ENCODE measurements at regions of chr11 and their contacts with region 1.

Region 1: DNA sequence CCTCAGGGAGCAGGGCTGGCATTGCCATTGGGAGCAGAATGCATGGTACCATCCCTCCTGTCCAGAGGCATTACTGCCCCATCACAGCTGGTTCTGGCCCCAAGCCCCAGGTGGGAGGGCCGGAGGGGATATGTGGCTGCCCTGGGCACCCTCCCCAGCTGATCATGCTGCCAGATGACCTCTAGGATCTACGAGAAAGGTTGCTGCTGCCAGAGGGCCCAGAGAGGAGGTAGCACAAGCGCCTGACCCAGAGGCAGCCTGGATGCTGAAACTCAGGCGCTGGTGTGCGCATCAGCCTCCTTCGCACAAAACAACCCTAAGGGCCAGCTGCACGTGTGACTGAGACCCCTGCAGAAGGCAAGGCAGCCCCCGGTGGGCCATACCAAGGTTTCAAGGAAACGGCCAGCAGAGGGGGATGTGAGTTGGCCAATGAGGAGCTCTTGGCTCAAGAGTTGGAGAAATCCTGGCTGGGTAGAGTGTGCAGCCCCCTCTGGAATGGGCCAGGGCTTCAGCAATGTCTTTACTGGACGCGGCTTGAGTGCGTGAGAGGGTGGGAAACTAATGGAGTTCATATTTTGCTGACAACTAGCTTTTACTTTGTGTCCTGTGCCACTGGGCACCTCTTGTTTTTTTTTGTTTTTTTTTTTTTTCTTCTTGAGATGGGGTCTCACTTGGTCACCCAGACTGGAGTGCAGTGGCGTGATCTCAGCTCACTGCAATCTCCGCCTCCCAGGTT is 88.3 kb upstream of the PARVA start:
- DNase-seq: no peak
- ATAC-seq: no peak
- H3K4me3 ChIP-seq: no peak overlapping the region
- H3K4me3 Mint-ChIP-seq: no peak overlapping the region
- H3K27ac ChIP-seq: no peak overlapping the region
- H3K27ac Mint-ChIP-seq: no peak overlapping the region
- H3K4me1 ChIP-seq: peaks cover 4 to 15% of the 10 kb centered on the region in 2 experiments
- H3K4me1 Mint-ChIP-seq: peaks cover 10 to 25% (median 12%) of the 10 kb centered on the region in 3 donors
- H3K27me3 ChIP-seq: peaks cover 0 to 4% of the 10 kb centered on the region in 2 experiments
- H3K27me3 Mint-ChIP-seq: no peaks in the 10 kb centered on the region

Region 2: GRCh38 chr11:12264361-12264760 is 24.7 kb before region 1 on chr11:
- CTCF ChIA-PET with region 1: no interaction called
- POLR2A ChIA-PET with region 1: no interaction called
- DNase-seq: no peak
- ATAC-seq: no peak
- H3K4me3 ChIP-seq: no peak overlapping the region
- H3K4me3 Mint-ChIP-seq: no peak overlapping the region
- H3K27ac ChIP-seq: no peak overlapping the region
- H3K27ac Mint-ChIP-seq: no peak overlapping the region
- H3K4me1 ChIP-seq: no peaks in the 10 kb centered on the region
- H3K4me1 Mint-ChIP-seq: no peaks in the 10 kb centered on the region
- H3K27me3 ChIP-seq: no peaks in the 10 kb centered on the region
- H3K27me3 Mint-ChIP-seq: no peaks in the 10 kb centered on the region

Region 3: DNA sequence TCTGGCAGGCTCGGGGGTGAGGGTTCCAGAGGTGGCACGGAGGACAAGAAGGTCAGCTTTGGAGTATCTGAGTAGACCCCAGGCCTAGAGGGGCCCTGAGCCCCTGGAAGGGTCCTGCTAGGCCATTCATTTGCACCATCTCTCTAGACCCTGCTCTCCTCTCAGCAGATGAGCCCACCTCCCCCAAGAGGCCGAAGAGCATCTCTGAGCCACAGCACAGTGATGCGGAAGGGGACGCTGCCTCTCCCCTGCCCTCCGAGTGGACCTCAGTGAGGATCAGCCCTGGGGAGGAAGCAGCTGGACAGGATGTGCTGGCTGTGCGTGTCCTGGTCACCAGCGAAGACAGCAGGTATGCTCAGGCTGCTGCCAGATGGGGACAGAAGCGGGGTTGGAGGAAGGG is 13.3 kb before region 1 on chr11:
- CTCF ChIA-PET with region 1: interaction called, 3 to 15 read pairs
- POLR2A ChIA-PET with region 1: no interaction called
- DNase-seq: no peak
- ATAC-seq: no peak
- H3K4me3 ChIP-seq: no peak overlapping the region
- H3K4me3 Mint-ChIP-seq: no peak overlapping the region
- H3K27ac ChIP-seq: no peak overlapping the region
- H3K27ac Mint-ChIP-seq: no peak overlapping the region
- H3K4me1 ChIP-seq: no peaks in the 10 kb centered on the region
- H3K4me1 Mint-ChIP-seq: no peaks in the 10 kb centered on the region
- H3K27me3 ChIP-seq: no peaks in the 10 kb centered on the region
- H3K27me3 Mint-ChIP-seq: no peaks in the 10 kb centered on the region

Region 4: GRCh38 chr11:12303421-12304149 is 14.5 kb after region 1 on chr11:
- CTCF ChIA-PET with region 1: no interaction called
- POLR2A ChIA-PET with region 1: no interaction called
- DNase-seq: no peak
- ATAC-seq: no peak
- H3K4me3 ChIP-seq: no peak overlapping the region
- H3K4me3 Mint-ChIP-seq: no peak overlapping the region
- H3K27ac ChIP-seq: no peak overlapping the region
- H3K27ac Mint-ChIP-seq: no peak overlapping the region
- H3K4me1 ChIP-seq: no peaks in the 10 kb centered on the region
- H3K4me1 Mint-ChIP-seq: no peaks in the 10 kb centered on the region
- H3K27me3 ChIP-seq: no peaks in the 10 kb centered on the region
- H3K27me3 Mint-ChIP-seq: no peaks in the 10 kb centered on the region